ENCODE measurements at regions of chr12 and their contacts with region 1.

Region 1: DNA sequence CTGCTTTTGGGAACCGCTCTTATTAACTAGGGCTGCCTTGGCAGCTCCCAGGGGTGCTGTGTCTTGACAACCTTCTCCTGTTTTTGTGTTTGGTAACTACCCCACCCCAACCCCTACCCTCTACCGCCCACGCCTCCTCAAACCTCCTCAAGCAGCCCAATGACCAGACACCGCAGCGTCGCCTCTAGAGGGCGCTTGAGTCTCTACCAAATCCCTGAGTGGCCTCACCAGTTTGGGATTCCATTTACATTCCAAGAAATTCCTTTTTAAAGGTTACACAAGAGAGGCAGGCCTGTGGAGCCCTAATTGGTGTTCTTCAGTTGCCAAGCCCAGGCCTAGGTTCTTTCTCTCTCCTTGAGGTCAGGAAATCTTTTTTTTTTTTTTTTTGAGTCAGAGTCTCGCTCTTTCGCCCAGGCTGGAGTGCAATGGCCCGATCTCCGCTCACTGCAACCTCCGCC is 72.3 kb upstream of the USP44 start:
- DNase-seq: peak; percentile 71
- H3K4me3 ChIP-seq: no peak overlapping the region
- H3K27ac ChIP-seq: no peak overlapping the region
- H3K4me1 ChIP-seq: peaks cover 4% of the 10 kb centered on the region
- H3K27me3 ChIP-seq: no peaks in the 10 kb centered on the region
- CTCF ChIP-seq: peak; percentile 70

Region 2: DNA sequence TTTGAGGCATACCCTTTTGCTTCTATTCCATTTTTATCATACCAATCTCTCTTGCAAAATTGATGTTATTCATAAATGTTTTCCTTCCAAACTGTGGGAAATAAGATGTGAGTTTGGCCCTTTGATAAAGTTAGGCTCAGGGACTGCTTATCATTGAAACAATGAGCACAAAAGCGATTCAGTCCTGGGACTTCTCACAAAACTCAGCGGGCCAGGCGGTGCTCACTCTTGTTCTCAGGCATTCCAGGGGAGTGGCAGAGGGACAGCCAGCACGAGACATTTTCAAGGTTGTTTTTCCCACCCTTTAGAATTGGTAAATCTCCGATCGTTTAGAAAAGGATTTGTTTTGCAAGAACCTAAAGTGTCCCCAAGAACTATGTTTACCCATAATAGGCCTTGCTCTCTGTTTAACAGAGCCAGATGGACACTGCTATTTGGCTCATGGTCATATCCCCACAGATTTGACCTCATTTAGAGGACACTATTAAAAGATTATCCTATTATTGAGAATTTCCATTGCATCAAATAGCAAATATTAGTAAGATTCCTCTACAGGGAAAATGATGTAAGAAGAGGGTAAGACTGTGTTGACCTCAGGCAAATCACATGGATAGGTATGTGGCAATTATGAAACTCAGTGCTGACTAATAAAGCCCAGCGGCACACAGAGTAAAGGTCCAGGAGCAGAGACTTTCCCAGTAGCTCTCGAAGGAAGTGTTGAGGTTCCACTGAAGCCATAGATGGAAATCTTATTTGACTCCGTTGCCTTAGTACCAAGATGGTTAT is 30.3 kb after region 1 on chr12:
- intact Hi-C with region 1: no loop called
- DNase-seq: no peak
- H3K4me3 ChIP-seq: no peak overlapping the region
- H3K27ac ChIP-seq: no peak overlapping the region
- H3K4me1 ChIP-seq: no peaks in the 10 kb centered on the region
- H3K27me3 ChIP-seq: no peaks in the 10 kb centered on the region
- CTCF ChIP-seq: no peak

Region 3: GRCh38 chr12:95733141-95733825 is 109.7 kb after region 1 on chr12:
- intact Hi-C with region 1: loop called (anchors 10 kb)
- DNase-seq: peak; percentile 33
- H3K4me3 ChIP-seq: no peak overlapping the region
- H3K27ac ChIP-seq: no peak overlapping the region
- H3K4me1 ChIP-seq: peaks cover 4% of the 10 kb centered on the region
- H3K27me3 ChIP-seq: no peaks in the 10 kb centered on the region
- CTCF ChIP-seq: no peak

Region 4: DNA sequence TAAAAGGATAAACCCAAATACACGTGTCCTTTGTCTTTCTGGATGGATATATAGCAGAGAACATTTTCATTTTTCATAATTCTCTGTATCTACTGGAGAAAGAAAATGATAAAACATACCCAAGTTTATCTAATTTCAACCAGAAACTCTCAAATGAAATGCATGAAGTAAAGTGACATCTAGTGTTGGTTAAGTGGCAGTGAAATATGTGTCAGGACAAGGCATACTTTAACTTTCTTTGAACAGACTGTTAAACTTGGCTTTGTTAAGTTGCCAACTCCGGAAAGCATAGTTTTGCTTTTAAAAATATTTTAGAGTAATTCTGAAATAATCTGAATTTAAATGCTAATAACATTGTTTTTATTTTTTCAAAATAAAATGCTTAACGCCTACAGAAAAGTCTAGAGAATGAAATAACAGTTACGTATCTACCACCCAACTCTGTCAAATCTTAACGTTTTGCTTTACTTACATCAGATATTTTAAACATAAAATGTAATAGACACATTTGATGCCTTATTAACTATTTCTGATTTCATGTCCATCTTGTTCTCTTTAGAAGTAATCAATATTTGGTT is 192.1 kb after region 1 on chr12:
- intact Hi-C with region 1: loop called (anchors 2 kb)
- DNase-seq: no peak
- H3K4me3 ChIP-seq: no peak overlapping the region
- H3K27ac ChIP-seq: no peak overlapping the region
- H3K4me1 ChIP-seq: no peaks in the 10 kb centered on the region
- H3K27me3 ChIP-seq: no peaks in the 10 kb centered on the region
- CTCF ChIP-seq: peak; percentile 62